ENCODE measurements at regions of chr17 and their contacts with region 1.

Region 1: GRCh38 chr17:75799398-75799797 is 14.8 kb downstream of the UNK start:
- DNase-seq: no peak
- H3K4me3 Mint-ChIP-seq: no peak overlapping the region
- H3K27ac Mint-ChIP-seq: no peak overlapping the region
- H3K4me1 Mint-ChIP-seq: no peaks in the 10 kb centered on the region
- H3K27me3 Mint-ChIP-seq: no peaks in the 10 kb centered on the region
- CTCF ChIP-seq: no peak

Region 2: GRCh38 chr17:75784473-75785015 is 14.9 kb before region 1 on chr17 and contains the start of gene UNK:
- CTCF ChIA-PET with region 1: interaction called, 11 read pairs
- intact Hi-C with region 1: no loop called
- DNase-seq: peak; percentile 96
- H3K4me3 Mint-ChIP-seq: peak within 1 kb of the TSS; percentile 84
- H3K27ac Mint-ChIP-seq: peak within 1 kb of the TSS; percentile 96
- H3K4me1 Mint-ChIP-seq: peaks cover 28% of the 10 kb centered on the region
- H3K27me3 Mint-ChIP-seq: peaks cover 7% of the 10 kb centered on the region
- CTCF ChIP-seq: no peak
- total RNA-seq, gene UNK: 26.0 and 29.7 TPM in 2 replicates

Region 3: DNA sequence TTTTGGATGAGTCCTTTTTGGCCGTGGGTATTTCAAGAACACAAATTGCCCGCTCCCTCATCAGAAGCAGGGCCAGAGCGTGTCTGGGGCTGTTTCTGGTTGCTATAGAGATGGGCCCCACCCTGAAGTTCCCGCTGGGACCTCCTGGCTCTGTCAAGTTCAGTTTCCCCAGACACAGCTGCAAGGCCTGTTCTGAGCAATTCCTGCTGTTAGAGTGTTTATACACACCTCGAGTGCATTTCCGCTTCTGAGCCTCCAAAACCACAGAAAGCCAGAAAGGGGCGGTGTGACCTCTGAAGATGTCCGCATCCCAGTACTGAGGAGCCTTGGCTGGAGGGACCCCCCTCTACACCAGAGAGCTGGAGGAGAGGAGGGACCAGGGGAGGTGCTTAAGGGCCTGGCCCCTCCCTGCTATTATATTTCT is 65.1 kb after region 1 on chr17:
- CTCF ChIA-PET with region 1: no interaction called
- intact Hi-C with region 1: no loop called
- DNase-seq: no peak
- H3K4me3 Mint-ChIP-seq: no peak overlapping the region
- H3K27ac Mint-ChIP-seq: no peak overlapping the region
- H3K4me1 Mint-ChIP-seq: peaks cover 8% of the 10 kb centered on the region
- H3K27me3 Mint-ChIP-seq: no peaks in the 10 kb centered on the region
- CTCF ChIP-seq: no peak